PC-9 (cell line): ENCODE measurements at regions of chr2 and their contacts with region 1.

Region 1: GRCh38 chr2:11583840-11584524 is 50.1 kb downstream of the GREB1 start:
- DNase-seq: peak; percentile 66 to 72
- H3K4me3 ChIP-seq: no peak overlapping the region
- H3K27ac ChIP-seq: no peak overlapping the region
- H3K4me1 ChIP-seq: no peaks in the 10 kb centered on the region
- H3K27me3 ChIP-seq: peaks cover 51% of the 10 kb centered on the region
- CTCF ChIP-seq: peak; percentile 95

Region 2: GRCh38 chr2:10709290-10709939 is 874.6 kb before region 1 on chr2:
- CTCF ChIA-PET with region 1: no interaction called
- POLR2A ChIA-PET with region 1: no interaction called
- intact Hi-C with region 1: loop called (anchors 5 kb)
- DNase-seq: peak in 1 of 2 experiments; percentile 51
- H3K4me3 ChIP-seq: no peak overlapping the region
- H3K27ac ChIP-seq: no peak overlapping the region
- H3K4me1 ChIP-seq: no peaks in the 10 kb centered on the region
- H3K27me3 ChIP-seq: no peaks in the 10 kb centered on the region
- CTCF ChIP-seq: peak; percentile 73

Region 3: GRCh38 chr2:11234309-11234708 is 349.7 kb before region 1 on chr2:
- CTCF ChIA-PET with region 1: no interaction called
- POLR2A ChIA-PET with region 1: no interaction called
- intact Hi-C with region 1: loop called (anchors 2 kb)
- DNase-seq: no peak
- H3K4me3 ChIP-seq: no peak overlapping the region
- H3K27ac ChIP-seq: no peak overlapping the region
- H3K4me1 ChIP-seq: no peaks in the 10 kb centered on the region
- H3K27me3 ChIP-seq: no peaks in the 10 kb centered on the region
- CTCF ChIP-seq: peak; percentile 82

Region 4: GRCh38 chr2:11465497-11466406 is 118.2 kb before region 1 on chr2 and contains the start of gene E2F6:
- CTCF ChIA-PET with region 1: interaction called, 13 read pairs
- POLR2A ChIA-PET with region 1: no interaction called
- intact Hi-C with region 1: no loop called
- DNase-seq: peak; percentile 80 to 94
- H3K4me3 ChIP-seq: peak within 1 kb of the TSS; percentile 60
- H3K27ac ChIP-seq: peak within 1 kb of the TSS; percentile 69
- H3K4me1 ChIP-seq: peaks cover 23% of the 10 kb centered on the region
- H3K27me3 ChIP-seq: no peaks in the 10 kb centered on the region
- CTCF ChIP-seq: no peak
- total RNA-seq, gene E2F6: 13.4 and 15.2 TPM in 2 replicates

Region 5: DNA sequence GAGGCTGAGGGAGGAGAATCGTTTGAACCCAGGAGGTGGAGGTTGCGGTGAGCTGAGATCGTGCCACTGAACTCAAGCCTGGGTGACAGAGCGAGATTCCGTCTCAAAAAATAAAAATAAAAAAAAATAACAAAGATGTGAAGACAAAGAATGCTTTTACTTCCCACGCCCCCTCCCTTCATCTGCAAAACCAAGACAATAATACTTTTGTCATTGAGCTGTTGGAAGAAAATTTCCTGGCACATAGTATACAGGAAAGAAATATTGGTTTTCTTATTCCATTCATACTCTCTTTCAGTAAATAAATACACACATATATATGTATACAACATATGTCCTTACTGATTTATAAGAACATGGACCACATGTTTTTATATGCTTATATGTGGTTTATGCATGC is 37.9 kb before region 1 on chr2:
- CTCF ChIA-PET with region 1: no interaction called
- POLR2A ChIA-PET with region 1: no interaction called
- intact Hi-C with region 1: no loop called
- DNase-seq: no peak
- H3K4me3 ChIP-seq: no peak overlapping the region
- H3K27ac ChIP-seq: no peak overlapping the region
- H3K4me1 ChIP-seq: no peaks in the 10 kb centered on the region
- H3K27me3 ChIP-seq: peaks cover 74% of the 10 kb centered on the region
- CTCF ChIP-seq: no peak

Region 6: GRCh38 chr2:11681722-11682589 is 98.0 kb after region 1 on chr2:
- CTCF ChIA-PET with region 1: interaction called, 5 read pairs
- POLR2A ChIA-PET with region 1: no interaction called
- intact Hi-C with region 1: loop called (anchors 2 kb)
- DNase-seq: peak in 1 of 2 experiments; percentile 60
- H3K4me3 ChIP-seq: no peak overlapping the region
- H3K27ac ChIP-seq: no peak overlapping the region
- H3K4me1 ChIP-seq: peaks cover 19% of the 10 kb centered on the region
- H3K27me3 ChIP-seq: 0 out of 2 replicates have a peak, but pooled peaks cover 4% of the 10 kb centered on the region
- CTCF ChIP-seq: peak; percentile 99